Activated CD4-positive, alpha-beta memory T cell treated with anti-CD3 and anti-CD28 coated beads for 36 hours (primary cell): ENCODE measurements at regions of chr3 and their contacts with region 1.

Region 1: DNA sequence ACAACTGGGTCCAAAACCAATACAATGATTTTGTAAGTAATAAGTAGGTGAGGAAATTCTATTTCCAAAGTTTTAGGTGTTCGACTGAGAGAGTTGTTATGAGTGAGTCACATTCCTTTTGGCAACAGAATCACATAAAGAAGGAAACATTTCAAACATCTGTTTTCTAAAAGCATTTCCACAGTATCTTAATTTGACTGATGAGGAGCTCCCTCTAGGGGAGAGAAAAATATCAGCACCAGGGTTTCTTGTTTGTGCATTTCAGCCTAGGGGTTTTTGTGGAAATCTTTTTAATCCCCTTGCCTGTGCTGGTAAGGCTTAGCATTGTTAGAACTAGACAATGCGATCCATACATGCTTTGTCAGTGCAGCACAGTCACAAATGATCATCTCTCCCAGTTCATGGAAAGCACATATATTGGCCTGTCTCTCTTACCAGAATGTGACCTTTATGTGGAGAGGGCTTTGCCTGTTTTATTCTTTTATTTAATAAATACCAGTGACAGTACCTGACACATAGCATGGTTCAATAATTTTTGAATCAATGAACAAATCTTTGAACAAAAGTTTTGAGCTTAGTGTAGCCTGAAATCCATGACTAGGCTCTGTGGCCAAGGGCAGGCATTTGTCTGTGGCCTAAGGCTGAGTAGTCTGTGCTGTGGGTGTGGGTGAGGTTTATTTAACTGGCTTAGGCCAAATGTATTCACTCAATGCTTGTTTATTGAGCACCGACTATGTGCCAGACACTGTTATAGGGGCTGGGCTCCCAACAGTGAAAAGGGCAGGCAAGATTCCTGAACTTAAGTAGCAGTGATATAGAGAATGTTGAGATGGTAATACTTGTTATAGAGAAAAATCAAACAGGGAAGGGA is 21.1 kb upstream of the IQCF6 start:
- DNase-seq: no peak
- H3K4me3 Mint-ChIP-seq: no peak overlapping the region
- H3K27ac Mint-ChIP-seq: no peak overlapping the region
- H3K4me1 Mint-ChIP-seq: peaks cover 13% of the 10 kb centered on the region
- H3K27me3 Mint-ChIP-seq: peaks cover 22% of the 10 kb centered on the region

Region 2: DNA sequence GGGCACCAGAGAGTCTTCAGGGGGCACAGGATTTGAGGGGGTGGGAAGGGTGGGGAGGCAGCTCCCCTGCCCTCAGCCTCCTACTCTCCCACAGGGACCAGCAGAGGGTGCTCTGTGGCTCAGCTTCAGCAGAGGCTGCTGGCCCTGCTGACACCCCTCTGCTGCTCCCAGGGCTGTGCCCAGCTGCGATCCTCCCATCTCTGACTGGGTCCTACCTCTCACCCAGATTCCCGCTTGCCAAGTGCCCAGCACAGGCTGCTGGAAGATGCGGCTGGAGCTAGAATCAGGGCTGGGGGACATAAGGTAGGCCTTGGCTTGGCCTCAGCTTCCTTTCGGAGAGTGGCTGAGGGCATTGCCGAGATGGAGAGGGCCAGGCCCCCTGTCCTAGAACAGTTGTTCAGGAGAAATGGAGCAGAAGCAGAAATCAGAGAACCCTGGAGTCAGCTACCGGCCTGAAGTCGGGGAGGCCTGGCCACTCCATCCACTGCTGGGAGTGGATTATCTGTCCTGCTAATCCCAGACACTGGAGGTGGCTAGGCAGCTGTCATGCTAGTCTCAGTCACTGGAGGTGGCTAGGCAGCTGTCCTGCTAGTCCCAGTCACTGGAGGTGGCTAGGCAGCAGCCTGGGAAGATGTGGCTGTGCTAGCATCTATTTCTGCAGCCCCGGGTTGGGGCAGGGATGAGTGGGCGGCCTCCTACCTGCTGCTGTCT is 89.3 kb before region 1 on chr3:
- CTCF ChIA-PET with region 1: interaction called, 88 read pairs
- POLR2A ChIA-PET with region 1: no interaction called
- intact Hi-C with region 1: no loop called
- DNase-seq: peak; percentile 15
- H3K4me3 Mint-ChIP-seq: no peak overlapping the region
- H3K27ac Mint-ChIP-seq: no peak overlapping the region
- H3K4me1 Mint-ChIP-seq: peaks cover 13% of the 10 kb centered on the region
- H3K27me3 Mint-ChIP-seq: no peaks in the 10 kb centered on the region

Region 3: DNA sequence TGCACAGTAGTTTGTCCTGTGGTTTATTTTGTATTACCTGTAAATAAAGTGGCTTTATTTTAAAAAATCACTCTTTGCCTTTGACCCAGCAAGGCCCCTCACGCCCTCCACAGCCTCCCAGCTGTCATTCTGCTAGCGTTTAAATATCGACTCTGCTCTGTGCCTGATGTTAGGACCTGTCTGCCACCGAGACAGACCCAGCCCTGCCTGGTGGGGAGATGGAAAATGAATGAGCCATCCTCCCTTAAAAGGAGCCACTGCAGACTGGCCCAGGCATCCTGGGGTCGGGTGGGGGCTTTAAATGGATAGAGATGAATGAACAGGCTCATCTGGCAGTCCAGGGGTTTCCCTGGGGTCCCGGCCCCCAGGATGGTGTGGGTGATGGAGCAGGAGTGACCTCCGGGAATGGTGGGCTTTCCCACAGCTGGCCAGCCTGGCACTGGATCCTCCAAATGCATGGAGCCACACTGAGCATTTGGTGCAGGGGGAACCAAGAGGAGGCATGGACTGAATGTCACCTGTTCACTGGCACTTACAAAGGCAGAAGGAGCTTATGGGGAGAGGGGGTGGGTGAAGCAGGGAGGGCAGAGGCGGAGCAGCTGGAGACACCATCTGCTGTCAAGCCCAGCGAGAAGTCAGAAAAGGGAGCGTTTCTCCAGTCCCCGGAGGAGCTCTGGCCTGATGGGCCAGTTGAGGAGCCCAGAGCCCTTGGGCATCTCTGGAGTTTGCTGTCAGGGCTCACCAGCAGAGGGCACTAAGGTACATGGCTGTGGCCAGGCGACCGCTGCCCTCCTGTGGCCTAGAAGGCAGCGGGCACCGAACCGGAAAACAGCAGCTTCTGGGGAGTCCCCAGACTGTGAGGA is 81.3 kb before region 1 on chr3:
- CTCF ChIA-PET with region 1: interaction called, 88 read pairs
- POLR2A ChIA-PET with region 1: no interaction called
- intact Hi-C with region 1: loop called (anchors 1 kb)
- DNase-seq: peak; percentile 83
- H3K4me3 Mint-ChIP-seq: no peak overlapping the region
- H3K27ac Mint-ChIP-seq: no peak overlapping the region
- H3K4me1 Mint-ChIP-seq: peaks cover 22% of the 10 kb centered on the region
- H3K27me3 Mint-ChIP-seq: no peaks in the 10 kb centered on the region

Region 4: GRCh38 chr3:51729042-51729633 is 71.0 kb before region 1 on chr3:
- CTCF ChIA-PET with region 1: interaction called, 4 read pairs
- POLR2A ChIA-PET with region 1: no interaction called
- intact Hi-C with region 1: loop called (anchors 2 kb)
- DNase-seq: no peak
- H3K4me3 Mint-ChIP-seq: no peak overlapping the region
- H3K27ac Mint-ChIP-seq: no peak overlapping the region
- H3K4me1 Mint-ChIP-seq: peaks cover 27% of the 10 kb centered on the region
- H3K27me3 Mint-ChIP-seq: peaks cover 2% of the 10 kb centered on the region

Region 5: DNA sequence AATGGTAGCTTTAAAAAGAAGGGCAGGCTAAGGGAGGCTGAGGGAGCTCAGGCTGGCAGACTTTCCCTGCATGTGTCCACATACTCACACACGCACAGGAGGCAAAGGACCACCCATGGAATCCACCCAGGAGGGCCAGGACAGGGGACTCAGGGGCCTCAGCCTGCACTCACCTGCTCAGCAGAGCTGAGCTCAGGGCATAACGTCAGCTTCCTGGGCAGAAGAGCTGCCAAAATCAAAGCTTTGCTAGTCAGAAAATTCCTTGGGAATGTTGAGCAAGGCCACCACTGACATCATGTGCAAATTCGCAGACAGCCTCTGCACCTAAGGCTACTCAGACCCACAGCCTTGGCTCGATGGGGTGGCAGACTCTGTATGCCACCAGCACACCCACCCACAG is 381.4 kb after region 1 on chr3:
- CTCF ChIA-PET with region 1: no interaction called
- POLR2A ChIA-PET with region 1: no interaction called
- intact Hi-C with region 1: no loop called
- DNase-seq: no peak
- H3K4me3 Mint-ChIP-seq: no peak overlapping the region
- H3K27ac Mint-ChIP-seq: no peak overlapping the region
- H3K4me1 Mint-ChIP-seq: no peaks in the 10 kb centered on the region
- H3K27me3 Mint-ChIP-seq: no peaks in the 10 kb centered on the region